ENCODE measurements at regions of chr3 and their contacts with region 1.

Region 1: GRCh38 chr3:159763602-159764489 is 224.8 kb upstream of the IL12A start:
- DNase-seq: peak; percentile 75 to 98
- H3K4me3 ChIP-seq: peak overlapping the region; percentile 61
- H3K27ac ChIP-seq: peak overlapping the region; percentile 84
- H3K4me1 ChIP-seq: peaks cover 42% of the 10 kb centered on the region
- H3K27me3 ChIP-seq: no peaks in the 10 kb centered on the region
- CTCF ChIP-seq: no peak; the same call in 1 of the 2 replicates

Region 2: GRCh38 chr3:159260049-159260662 is 503.7 kb before region 1 on chr3:
- CTCF ChIA-PET with region 1: no interaction called
- POLR2A ChIA-PET with region 1: interaction called, 3 read pairs
- intact Hi-C with region 1: loop called (anchors 1 kb)
- DNase-seq: peak; percentile 45 to 57
- H3K4me3 ChIP-seq: no peak overlapping the region
- H3K27ac ChIP-seq: no peak overlapping the region
- H3K4me1 ChIP-seq: no peaks in the 10 kb centered on the region
- H3K27me3 ChIP-seq: no peaks in the 10 kb centered on the region
- CTCF ChIP-seq: peak; percentile 91

Region 3: GRCh38 chr3:159499031-159499793 is 264.6 kb before region 1 on chr3:
- CTCF ChIA-PET with region 1: no interaction called
- POLR2A ChIA-PET with region 1: interaction called, 11 read pairs
- intact Hi-C with region 1: no loop called
- DNase-seq: no peak
- H3K4me3 ChIP-seq: no peak overlapping the region
- H3K27ac ChIP-seq: no peak overlapping the region
- H3K4me1 ChIP-seq: no peaks in the 10 kb centered on the region
- H3K27me3 ChIP-seq: no peaks in the 10 kb centered on the region
- CTCF ChIP-seq: no peak

Region 4: GRCh38 chr3:159775372-159775961 is 11.6 kb after region 1 on chr3:
- CTCF ChIA-PET with region 1: no interaction called
- POLR2A ChIA-PET with region 1: interaction called, 4 read pairs
- intact Hi-C with region 1: loop called (anchors 1 kb)
- DNase-seq: peak; percentile 56 to 61
- H3K4me3 ChIP-seq: no peak overlapping the region
- H3K27ac ChIP-seq: no peak overlapping the region
- H3K4me1 ChIP-seq: peaks cover 23% of the 10 kb centered on the region
- H3K27me3 ChIP-seq: no peaks in the 10 kb centered on the region
- CTCF ChIP-seq: no peak

Region 5: DNA sequence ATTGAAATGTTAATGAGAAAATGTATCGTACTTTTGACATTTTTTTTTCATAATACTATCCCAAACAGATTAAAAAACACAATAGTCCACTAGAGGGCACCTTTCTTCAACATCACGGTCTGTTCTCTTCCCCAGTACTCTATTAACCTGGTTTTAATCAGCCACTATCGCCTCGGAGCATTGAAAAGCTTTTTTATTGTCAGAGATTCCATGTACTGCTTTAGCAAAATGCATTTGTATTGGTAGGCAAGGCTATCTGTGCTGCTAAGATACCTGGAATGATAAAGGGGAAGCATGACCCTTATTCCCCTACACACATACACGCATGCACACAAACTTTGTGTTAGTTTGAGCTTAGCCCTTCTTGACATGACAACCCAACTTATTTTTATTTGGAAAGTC is 64.7 kb after region 1 on chr3:
- CTCF ChIA-PET with region 1: no interaction called
- POLR2A ChIA-PET with region 1: interaction called, 3 read pairs
- intact Hi-C with region 1: loop called (anchors 1 kb)
- DNase-seq: no peak
- H3K4me3 ChIP-seq: no peak overlapping the region
- H3K27ac ChIP-seq: no peak overlapping the region
- H3K4me1 ChIP-seq: peaks cover 39% of the 10 kb centered on the region
- H3K27me3 ChIP-seq: no peaks in the 10 kb centered on the region
- CTCF ChIP-seq: peak; percentile 76

Region 6: GRCh38 chr3:160003520-160004128 is 239.8 kb after region 1 on chr3:
- CTCF ChIA-PET with region 1: interaction called, 4 read pairs
- POLR2A ChIA-PET with region 1: no interaction called
- intact Hi-C with region 1: loop called (anchors 2 kb)
- DNase-seq: peak in 1 of 2 experiments; percentile 65
- H3K4me3 ChIP-seq: no peak overlapping the region
- H3K27ac ChIP-seq: no peak overlapping the region
- H3K4me1 ChIP-seq: no peaks in the 10 kb centered on the region
- H3K27me3 ChIP-seq: no peaks in the 10 kb centered on the region
- CTCF ChIP-seq: peak; percentile 77

Region 7: DNA sequence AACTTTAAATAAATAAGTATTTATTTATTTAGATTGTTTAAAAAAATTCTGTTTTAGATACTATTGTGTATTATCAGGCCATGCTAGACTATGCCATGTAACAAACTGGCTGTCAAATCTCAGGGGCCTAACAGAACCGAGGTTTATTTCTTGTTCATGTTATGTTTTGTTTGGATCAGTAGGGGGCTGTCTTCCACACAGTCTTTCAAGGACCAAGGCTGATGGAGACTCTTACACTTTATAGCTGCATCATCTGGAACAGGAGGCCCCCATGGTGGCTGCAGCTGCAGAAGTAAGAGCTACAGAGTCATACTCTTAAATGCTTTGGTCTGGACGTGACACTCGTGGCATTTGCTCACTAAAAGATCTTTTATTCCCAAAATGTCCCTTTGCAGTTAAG is 880.1 kb after region 1 on chr3:
- CTCF ChIA-PET with region 1: no interaction called
- POLR2A ChIA-PET with region 1: no interaction called
- intact Hi-C with region 1: no loop called
- DNase-seq: no peak
- H3K4me3 ChIP-seq: no peak overlapping the region
- H3K27ac ChIP-seq: no peak overlapping the region
- H3K4me1 ChIP-seq: no peaks in the 10 kb centered on the region
- H3K27me3 ChIP-seq: no peaks in the 10 kb centered on the region
- CTCF ChIP-seq: no peak